ENCODE measurements at regions of chr2 and their contacts with region 1.

Region 1: DNA sequence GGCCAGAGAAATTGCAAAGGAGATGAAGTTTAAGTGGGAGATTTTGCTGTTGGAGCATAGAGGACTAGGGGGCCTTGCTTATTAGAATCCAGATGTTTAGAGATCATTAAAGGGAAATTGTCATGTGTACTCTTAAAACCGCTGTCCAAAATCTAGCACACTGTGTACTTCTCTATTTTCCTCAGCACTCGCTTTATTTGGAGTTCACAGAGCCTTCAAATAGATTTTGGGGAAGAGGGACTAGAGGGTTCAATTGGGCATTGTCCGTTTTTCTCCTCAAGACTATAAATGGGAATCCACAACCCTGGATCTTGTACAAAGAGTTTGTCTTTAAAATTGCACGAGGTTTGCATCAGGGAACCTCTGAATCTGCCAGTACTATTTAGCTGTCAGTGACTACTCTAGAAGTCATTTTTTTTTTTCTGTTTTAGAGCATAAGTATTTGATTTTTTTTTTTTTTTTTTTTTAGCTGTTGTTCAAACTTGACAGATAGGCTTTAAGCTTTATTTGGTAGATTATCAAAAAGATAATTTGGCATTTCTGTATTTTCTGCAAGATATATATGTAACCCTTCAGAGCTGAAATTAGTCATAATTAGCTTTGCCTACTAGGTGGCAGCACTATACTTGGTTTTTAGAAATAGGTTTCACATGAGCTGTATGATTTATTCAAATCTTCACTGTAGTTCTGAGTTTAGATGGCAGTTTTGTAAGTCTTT is 14.2 kb downstream of the PMS1 start:
- DNase-seq: peak; percentile 62
- ATAC-seq: peak; percentile 80
- H3K4me3 ChIP-seq: no peak overlapping the region
- H3K27ac ChIP-seq: no peak overlapping the region
- H3K4me1 ChIP-seq: peaks cover 9% of the 10 kb centered on the region
- H3K27me3 ChIP-seq: no peaks in the 10 kb centered on the region
- CTCF ChIP-seq: peak; percentile 74

Region 2: DNA sequence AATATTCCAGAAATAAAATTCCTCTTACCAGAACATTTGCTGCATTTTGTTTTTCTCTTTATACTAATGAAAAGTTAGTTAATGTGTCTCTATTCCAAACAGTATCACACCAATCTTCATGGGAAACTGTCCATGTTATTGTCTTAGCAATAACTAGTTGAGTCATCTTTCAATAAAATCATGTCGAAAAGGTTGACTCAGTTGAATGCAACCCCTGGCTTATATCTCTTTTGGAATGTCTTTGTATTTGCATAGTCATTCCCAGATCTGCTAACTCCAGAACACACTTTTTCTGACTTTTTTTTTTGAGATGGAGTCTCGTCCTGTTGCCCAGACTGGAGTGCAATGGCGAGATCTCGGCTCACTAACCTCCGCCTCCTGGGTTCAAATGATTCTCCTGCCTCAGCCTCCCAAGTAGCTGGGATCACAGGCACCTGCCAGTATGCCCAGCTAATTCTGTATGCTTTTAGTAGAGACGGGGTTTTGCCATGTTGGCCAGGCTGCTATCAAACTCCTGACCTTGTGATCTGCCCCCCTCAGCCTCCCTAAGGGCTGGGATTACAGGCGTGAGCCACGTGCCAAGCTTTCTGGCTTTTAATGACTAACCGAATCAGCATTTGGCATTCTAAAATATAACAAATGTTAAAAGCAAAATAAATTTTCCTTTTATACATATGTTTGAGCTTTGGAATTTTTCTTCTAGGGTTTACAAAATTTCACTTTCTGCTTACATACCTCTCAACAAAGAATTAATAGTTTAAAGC is 1640.0 kb before region 1 on chr2:
- CTCF ChIA-PET with region 1: no interaction called
- POLR2A ChIA-PET with region 1: no interaction called
- intact Hi-C with region 1: no loop called
- DNase-seq: peak; percentile 78
- ATAC-seq: peak; percentile 91
- H3K4me3 ChIP-seq: no peak overlapping the region
- H3K27ac ChIP-seq: peak overlapping the region; percentile 66
- H3K4me1 ChIP-seq: peaks cover 12% of the 10 kb centered on the region
- H3K27me3 ChIP-seq: no peaks in the 10 kb centered on the region
- CTCF ChIP-seq: no peak

Region 3: GRCh38 chr2:189641590-189641989 is 156.9 kb before region 1 on chr2:
- CTCF ChIA-PET with region 1: no interaction called
- POLR2A ChIA-PET with region 1: no interaction called
- intact Hi-C with region 1: no loop called
- DNase-seq: no peak
- ATAC-seq: no peak
- H3K4me3 ChIP-seq: no peak overlapping the region
- H3K27ac ChIP-seq: no peak overlapping the region
- H3K4me1 ChIP-seq: no peaks in the 10 kb centered on the region
- H3K27me3 ChIP-seq: no peaks in the 10 kb centered on the region
- CTCF ChIP-seq: no peak

Region 4: GRCh38 chr2:190023861-190024260 is 225.4 kb after region 1 on chr2:
- CTCF ChIA-PET with region 1: interaction called, 3 read pairs
- POLR2A ChIA-PET with region 1: no interaction called
- intact Hi-C with region 1: loop called (anchors 5 kb)
- DNase-seq: peak; percentile 73
- ATAC-seq: peak; percentile 73
- H3K4me3 ChIP-seq: no peak overlapping the region
- H3K27ac ChIP-seq: no peak overlapping the region
- H3K4me1 ChIP-seq: no peaks in the 10 kb centered on the region
- H3K27me3 ChIP-seq: peaks cover 8% of the 10 kb centered on the region; the same call in 1 of the 2 replicates
- CTCF ChIP-seq: peak; percentile 77